Activated T-helper 2 cell treated with anti-CD3 and anti-CD28 coated beads, Interferon-gamma antibody, Interleukin-2, Interleukin-4, amounts not matched to agents 10 μg/mL and 5 μg/mL and 100 μg/mL, durations not matched to agents 14 hours and 24 hours and 36 hours (primary cell): ENCODE measurements at regions of chr5 and their contacts with region 1.

Region 1: GRCh38 chr5:133051580-133052332 is at the start of gene HSPA4:
- DNase-seq: peak; percentile 97
- H3K4me3 Mint-ChIP-seq: peak within 1 kb of the TSS; percentile 84
- H3K27ac Mint-ChIP-seq: peak within 1 kb of the TSS; percentile 99
- H3K4me1 Mint-ChIP-seq: peaks cover 30% of the 10 kb centered on the region
- H3K27me3 Mint-ChIP-seq: no peaks in the 10 kb centered on the region
- total RNA-seq, gene HSPA4: 223 and 229 TPM in 2 replicates

Region 2: DNA sequence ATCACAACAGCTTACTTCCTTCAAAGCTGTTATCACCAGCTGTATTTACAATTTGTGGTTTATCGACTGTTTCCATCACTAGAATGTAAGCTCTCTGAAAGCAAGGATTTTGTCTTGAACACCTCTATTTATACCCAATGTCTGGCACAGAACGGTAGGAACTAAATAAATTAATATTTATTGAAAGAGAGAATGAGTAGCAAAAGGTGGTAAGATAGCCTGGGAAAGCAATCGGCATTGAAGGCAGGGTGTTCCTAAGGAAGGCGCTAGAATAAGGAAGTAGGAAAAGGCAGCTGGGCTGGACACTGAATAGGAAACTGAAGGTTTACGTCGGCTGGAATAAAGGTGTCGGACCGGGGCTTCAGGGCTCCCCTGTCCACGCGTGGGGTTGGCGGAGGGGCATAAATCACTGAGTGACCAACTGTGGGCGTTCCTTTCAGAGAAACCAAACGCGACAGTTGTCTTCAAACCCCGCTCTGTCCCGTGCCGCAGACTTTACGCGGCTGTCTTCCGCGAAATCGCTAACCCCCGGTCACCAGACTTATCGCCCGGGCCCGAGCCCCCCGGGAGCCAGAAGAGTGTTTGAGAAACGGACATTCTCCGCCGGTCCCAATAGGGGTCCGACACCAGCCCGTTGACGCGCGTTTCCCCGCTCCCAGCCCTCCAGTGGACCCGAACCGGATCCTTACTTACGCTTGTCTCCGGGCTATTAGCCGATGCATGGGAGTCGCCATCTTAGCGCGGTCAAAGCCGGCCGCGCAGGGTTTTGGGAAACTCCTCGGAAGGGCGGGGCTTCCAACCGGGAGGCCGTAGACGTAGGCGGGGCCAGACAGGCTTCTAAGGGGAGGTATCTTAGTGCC is 25.7 kb before region 1 on chr5 and contains the start of gene ZCCHC10:
- intact Hi-C with region 1: loop called (anchors 1 kb)
- DNase-seq: peak; percentile 89
- H3K4me3 Mint-ChIP-seq: peak within 1 kb of the TSS; percentile 92
- H3K27ac Mint-ChIP-seq: peak within 1 kb of the TSS; percentile 87
- H3K4me1 Mint-ChIP-seq: peaks cover 11% of the 10 kb centered on the region
- H3K27me3 Mint-ChIP-seq: no peaks in the 10 kb centered on the region
- total RNA-seq, gene ZCCHC10: 35.7 and 39.3 TPM in 2 replicates